Pancreas (tissue), 10 donors: ENCODE measurements at regions of chr5 and their contacts with region 1.

Region 1: GRCh38 chr5:115098041-115098702 is 71.5 kb downstream of the TRIM36 start:
- DNase-seq: peak in 2 of 6 donors; percentile 24 to 38
- ATAC-seq: peak; percentile 77 to 95 (median 91)
- H3K4me3 ChIP-seq: no peak overlapping the region
- H3K27ac ChIP-seq: no peak overlapping the region
- H3K4me1 ChIP-seq: no peaks in the 10 kb centered on the region
- H3K27me3 ChIP-seq: no peaks in the 10 kb centered on the region
- CTCF ChIP-seq: peak in 3 of 4 donors; percentile 49 to 62 (median 61)

Region 2: DNA sequence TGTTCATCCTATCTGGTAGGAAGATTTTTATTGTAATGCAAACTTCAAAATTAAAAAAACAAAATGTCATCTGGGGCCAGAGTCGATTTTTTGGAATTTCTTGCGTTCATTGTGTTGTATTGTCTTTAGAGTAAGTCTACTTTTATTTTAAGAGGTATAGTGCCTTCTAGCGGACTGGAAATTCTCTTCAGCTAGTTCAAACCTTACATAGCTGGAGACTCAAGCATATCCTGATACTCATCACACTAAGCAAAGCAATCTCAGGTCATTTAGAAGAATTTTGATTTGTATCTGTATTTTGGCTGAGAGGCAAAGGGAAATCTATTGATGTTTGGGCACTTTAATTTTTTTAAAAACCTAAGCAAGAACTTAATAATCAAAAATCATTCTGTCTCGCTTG is 294.8 kb before region 1 on chr5:
- intact Hi-C with region 1: no loop called
- DNase-seq: no peak
- ATAC-seq: no peak
- H3K4me3 ChIP-seq: no peak overlapping the region
- H3K27ac ChIP-seq: no peak overlapping the region
- H3K4me1 ChIP-seq: no peaks in the 10 kb centered on the region
- H3K27me3 ChIP-seq: no peaks in the 10 kb centered on the region
- CTCF ChIP-seq: no peak

Region 3: DNA sequence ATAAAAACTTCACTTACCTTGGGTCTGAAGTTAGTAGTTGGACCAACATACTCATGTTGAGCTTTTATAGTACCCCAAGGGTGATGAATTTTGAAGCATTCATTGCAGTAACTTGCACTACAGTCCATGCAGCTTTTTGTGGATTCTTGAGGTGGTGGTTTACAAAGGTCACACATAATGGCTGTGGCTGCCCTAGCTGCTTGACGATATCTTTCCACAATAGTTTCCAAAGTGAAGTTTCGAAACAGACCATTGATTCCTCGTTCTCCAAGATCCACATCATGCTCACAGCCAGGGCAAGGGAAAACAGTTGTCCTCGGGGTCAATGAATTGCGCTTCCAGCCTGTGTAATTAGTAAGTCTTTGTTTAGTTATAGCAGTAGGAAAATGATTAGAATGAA is 48.9 kb after region 1 on chr5:
- intact Hi-C with region 1: no loop called
- DNase-seq: no peak
- ATAC-seq: no peak
- H3K4me3 ChIP-seq: no peak overlapping the region
- H3K27ac ChIP-seq: no peak overlapping the region
- H3K4me1 ChIP-seq: no peaks in the 10 kb centered on the region
- H3K27me3 ChIP-seq: no peaks in the 10 kb centered on the region
- CTCF ChIP-seq: no peak

Region 4: GRCh38 chr5:115246361-115246991 is 148.3 kb after region 1 on chr5:
- intact Hi-C with region 1: loop called in 2 of 3 experiments (anchors 10 kb)
- DNase-seq: no peak
- ATAC-seq: peak; percentile 56 to 86 (median 84)
- H3K4me3 ChIP-seq: no peak overlapping the region
- H3K27ac ChIP-seq: no peak overlapping the region
- H3K4me1 ChIP-seq: peaks cover 4 to 17% (median 8%) of the 10 kb centered on the region in 3 donors
- H3K27me3 ChIP-seq: no peaks in the 10 kb centered on the region
- CTCF ChIP-seq: peak in 3 of 4 donors; percentile 29 to 64 (median 58)